Cardiac septum (tissue), 1 donor: ENCODE measurements at regions of chr11 and their contacts with region 1.

Region 1: DNA sequence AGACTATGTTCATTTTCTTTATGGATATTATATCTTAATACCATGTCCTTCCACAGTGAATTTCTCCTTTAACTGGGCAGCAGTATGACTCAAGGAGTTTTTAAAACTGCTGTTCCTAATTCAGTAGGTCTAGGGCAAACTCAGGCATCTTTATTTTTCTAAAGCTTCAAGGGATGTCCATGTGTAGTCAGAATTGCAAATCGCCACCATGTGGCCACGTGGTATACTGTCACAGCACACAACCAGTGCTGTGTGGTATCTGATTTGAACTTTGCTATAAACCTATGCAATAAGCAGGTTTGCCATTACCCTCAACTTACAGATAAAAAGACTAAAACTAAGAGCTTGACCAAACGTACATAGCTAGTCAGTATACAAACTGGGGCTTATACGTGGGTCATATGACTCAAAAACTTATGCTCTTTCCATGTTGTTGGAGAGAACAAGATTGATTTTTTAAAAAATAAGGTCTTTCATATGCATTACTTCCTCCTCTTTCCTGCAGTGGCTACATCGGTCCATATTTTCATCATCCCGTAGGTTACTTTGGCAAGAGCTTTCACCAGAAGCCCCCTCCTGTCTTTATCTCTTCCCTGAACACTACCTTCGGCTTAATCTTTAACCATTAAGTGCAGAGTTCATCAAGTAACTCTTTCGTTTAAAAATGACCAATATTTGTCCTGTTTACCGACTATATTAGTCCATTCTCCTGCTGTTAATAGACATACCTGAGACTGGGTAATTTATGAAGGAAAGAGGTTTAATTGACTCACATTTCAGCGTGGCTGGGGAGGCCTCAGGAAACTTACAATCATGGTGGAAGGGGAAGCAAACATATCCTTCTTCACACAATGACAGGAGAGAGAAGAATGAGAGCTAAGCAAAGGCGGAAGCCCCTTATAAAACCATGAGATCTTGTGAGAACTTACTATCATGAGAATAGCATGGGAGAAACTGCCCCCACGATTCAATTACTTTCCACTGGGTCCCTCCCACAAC is 8.0 kb upstream of the HTATIP2 start:
- DNase-seq: no peak

Region 2: GRCh38 chr11:20022363-20023081 is 333.0 kb before region 1 on chr11:
- intact Hi-C with region 1: no loop called
- DNase-seq: peak; percentile 51

Region 3: GRCh38 chr11:20127671-20128527 is 227.6 kb before region 1 on chr11:
- intact Hi-C with region 1: loop called (anchors 2 kb)
- DNase-seq: no peak